AG04450 (cell line): ENCODE measurements at regions of chr1 and their contacts with region 1.

Region 1: DNA sequence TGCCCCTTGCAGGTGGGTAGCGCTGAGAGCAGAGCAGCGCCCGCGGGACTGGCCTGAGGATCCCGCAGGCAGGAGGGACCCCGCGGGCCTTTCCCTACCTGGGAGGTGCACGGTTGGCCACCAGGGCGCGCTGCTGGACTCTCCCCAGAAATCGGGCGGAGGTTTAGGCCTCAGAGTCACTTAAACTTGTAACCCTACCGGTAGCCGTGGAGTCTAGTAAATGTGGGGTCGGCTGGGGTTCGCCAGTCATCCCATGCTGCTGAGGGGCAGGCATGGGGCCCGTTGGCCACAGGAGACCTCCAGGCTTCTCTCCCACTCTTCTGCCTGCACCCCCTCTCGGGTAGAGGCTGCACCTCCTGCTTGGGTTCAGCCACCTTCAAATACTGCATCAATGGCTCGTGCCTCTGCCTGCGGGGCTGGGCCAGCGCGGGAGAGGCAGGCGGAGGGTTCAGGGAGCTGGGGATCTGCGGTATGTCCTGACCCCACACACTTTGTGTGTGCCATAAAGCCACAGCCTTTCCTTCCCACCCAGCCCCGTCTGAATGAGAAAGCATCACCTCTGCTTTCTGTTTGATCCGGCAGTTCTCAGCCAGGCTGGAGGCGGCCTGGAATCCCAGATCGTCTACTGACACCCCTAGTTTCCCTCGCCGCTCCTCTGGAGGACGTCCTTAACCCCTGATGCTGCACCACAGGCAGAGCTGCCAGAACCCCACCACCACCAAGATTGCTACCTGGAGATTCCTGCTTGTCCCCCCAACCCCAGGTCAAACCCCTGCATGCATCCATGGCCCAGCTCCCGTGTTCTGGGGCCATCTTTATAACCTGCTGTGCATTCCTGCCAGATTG is 12.3 kb upstream of the GSTM4 start:
- DNase-seq: no peak
- H3K4me3 ChIP-seq: no peak overlapping the region
- H3K27ac ChIP-seq: no peak overlapping the region
- H3K27me3 ChIP-seq: no peaks in the 10 kb centered on the region
- CTCF ChIP-seq: peak; percentile 87

Region 2: DNA sequence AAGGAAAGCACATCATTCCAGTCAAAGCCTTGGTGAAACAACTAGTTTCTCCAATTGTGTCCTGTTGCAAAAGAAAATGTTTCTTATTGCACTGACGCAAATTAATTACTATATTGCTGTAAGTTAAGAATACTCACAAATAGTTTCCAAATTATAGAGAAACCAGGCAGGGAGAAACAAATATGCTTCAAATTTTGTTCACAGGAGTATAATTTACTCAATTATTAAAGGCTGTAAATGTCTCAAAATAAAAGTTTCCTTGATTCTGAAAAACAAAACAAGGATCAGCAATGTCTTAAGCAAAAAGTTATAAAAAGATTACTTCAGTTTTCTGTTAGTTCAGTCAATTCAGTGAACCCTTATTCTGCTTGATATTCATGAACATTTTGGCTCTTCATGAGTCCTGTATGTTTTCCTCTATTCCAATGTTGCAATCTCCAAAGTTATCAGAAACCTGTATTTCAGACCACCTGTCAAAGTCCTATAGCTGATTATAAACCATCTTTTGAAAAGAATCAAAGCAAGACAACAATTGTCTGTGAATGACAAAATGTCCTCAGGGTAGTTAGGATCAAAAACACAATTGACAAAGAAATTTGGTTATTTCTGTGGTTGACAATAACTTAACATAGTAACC is 189.0 kb before region 1 on chr1:
- CTCF ChIA-PET with region 1: no interaction called
- POLR2A ChIA-PET with region 1: no interaction called
- DNase-seq: no peak
- H3K4me3 ChIP-seq: no peak overlapping the region
- H3K27ac ChIP-seq: no peak overlapping the region
- H3K27me3 ChIP-seq: peaks cover 12% of the 10 kb centered on the region
- CTCF ChIP-seq: no peak

Region 3: DNA sequence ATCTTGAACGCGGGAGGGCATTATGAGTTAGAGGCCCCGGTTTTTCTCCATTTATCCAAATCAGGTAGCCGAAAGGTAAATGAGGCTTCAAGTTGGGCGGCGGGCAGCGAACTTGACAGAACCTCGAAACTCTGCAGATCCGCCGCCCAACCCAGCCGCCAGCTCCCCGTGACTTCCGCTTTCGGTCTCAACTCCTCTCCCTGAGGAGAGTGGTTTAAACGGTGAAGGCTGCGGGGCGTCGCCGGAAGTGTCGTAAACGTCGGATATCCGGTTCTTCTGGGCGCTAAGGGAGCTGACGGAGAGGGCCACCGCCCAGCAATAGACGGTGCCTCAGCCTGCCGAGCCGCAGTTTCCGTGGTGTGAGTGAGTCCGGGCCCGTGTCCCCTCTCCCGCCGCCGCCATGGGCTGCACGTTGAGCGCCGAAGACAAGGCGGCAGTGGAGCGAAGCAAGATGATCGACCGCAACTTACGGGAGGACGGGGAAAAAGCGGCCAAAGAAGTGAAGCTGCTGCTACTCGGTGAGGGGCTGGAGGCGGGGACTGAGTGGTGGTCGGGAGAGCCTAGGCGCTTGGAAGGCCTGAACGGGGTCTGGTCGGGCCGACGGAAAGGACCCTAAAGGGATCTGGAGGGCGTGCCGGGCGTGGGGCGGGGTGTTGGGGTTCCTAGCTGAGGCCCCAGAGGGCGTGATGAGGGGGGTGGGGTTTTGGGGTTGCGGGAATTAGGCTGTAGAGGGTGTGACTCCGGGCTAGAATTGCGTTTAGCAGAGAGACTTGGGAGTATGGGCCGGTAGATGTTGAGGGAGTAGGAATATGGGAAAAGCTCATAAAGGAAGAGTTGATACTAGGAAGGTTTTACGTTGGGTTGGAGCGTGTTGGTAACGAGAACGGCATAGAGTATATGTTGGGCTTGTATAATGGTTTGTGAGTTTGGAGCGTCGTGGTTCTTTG is 95.0 kb before region 1 on chr1 and contains the start of gene GNAI3:
- CTCF ChIA-PET with region 1: interaction called, 106 read pairs
- POLR2A ChIA-PET with region 1: interaction called, 15 read pairs
- DNase-seq: peak; percentile 85
- H3K4me3 ChIP-seq: peak within 1 kb of the TSS; percentile 98
- H3K27ac ChIP-seq: peak within 1 kb of the TSS; percentile 83
- H3K27me3 ChIP-seq: no peaks in the 10 kb centered on the region
- CTCF ChIP-seq: no peak
- polyA plus RNA-seq, gene GNAI3: 10.2 and 14.8 TPM in 2 replicates

Region 4: GRCh38 chr1:109579491-109579890 is 64.1 kb before region 1 on chr1:
- CTCF ChIA-PET with region 1: interaction called, 10 read pairs
- POLR2A ChIA-PET with region 1: no interaction called
- DNase-seq: no peak
- H3K4me3 ChIP-seq: no peak overlapping the region
- H3K27ac ChIP-seq: no peak overlapping the region
- H3K27me3 ChIP-seq: no peaks in the 10 kb centered on the region
- CTCF ChIP-seq: no peak

Region 5: GRCh38 chr1:109620841-109621286 is 22.7 kb before region 1 on chr1:
- CTCF ChIA-PET with region 1: interaction called, 64 read pairs
- POLR2A ChIA-PET with region 1: interaction called, 5 read pairs
- DNase-seq: peak; percentile 78
- H3K4me3 ChIP-seq: peak overlapping the region; percentile 95
- H3K27ac ChIP-seq: peak overlapping the region; percentile 97
- H3K27me3 ChIP-seq: no peaks in the 10 kb centered on the region
- CTCF ChIP-seq: no peak

Region 6: DNA sequence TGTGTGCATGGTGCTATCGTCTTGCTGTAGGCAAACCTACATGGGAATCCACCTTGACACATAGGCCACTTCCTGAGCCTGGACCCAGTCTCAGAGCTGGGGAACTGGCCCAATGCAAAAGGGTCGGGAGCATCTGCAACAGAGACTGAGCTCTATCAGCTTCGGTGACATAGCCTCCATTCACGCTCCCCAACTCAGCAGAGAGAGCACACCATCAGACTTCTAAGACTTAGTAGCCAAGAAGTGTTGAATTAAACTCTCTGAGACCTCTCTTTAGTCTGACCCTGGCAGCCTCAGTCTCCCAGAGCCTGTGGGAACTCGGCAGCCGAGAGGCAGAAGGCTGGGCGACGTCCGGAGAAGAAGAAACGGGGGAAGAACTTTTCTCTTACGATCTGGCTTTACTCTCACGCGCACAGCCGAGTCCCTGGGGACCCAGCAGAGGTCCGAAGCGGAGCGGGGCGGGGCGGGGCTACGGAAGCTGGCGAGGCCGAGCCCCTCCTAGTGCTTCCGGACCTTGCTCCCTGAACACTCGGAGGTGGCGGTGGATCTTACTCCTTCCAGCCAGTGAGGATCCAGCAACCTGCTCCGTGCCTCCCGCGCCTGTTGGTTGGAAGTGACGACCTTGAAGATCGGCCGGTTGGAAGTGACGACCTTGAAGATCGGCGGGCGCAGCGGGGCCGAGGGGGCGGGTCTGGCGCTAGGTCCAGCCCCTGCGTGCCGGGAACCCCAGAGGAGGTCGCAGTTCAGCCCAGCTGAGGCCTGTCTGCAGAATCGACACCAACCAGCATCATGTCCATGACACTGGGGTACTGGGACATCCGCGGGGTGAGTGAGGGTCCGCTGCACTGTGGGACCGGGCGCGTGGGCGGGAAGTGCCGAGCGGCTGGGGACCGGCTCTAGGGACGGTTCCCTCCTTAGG is 12.3 kb after region 1 on chr1 and contains the start of gene GSTM4:
- CTCF ChIA-PET with region 1: interaction called, 102 read pairs
- POLR2A ChIA-PET with region 1: interaction called, 3 read pairs
- DNase-seq: no peak
- H3K4me3 ChIP-seq: peak within 1 kb of the TSS; percentile 84
- H3K27ac ChIP-seq: no peak within 1 kb of the TSS
- H3K27me3 ChIP-seq: no peaks in the 10 kb centered on the region
- CTCF ChIP-seq: no peak
- polyA plus RNA-seq, gene GSTM4: 62.6 and 64.1 TPM in 2 replicates

Region 7: GRCh38 chr1:109697088-109697487 is 53.5 kb after region 1 on chr1:
- CTCF ChIA-PET with region 1: no interaction called
- POLR2A ChIA-PET with region 1: no interaction called
- DNase-seq: no peak
- H3K4me3 ChIP-seq: no peak overlapping the region
- H3K27ac ChIP-seq: no peak overlapping the region
- H3K27me3 ChIP-seq: no peaks in the 10 kb centered on the region
- CTCF ChIP-seq: no peak

Region 8: GRCh38 chr1:109773146-109773899 is 129.7 kb after region 1 on chr1:
- CTCF ChIA-PET with region 1: interaction called, 365 read pairs
- POLR2A ChIA-PET with region 1: interaction called, 3 read pairs
- DNase-seq: peak; percentile 71
- H3K4me3 ChIP-seq: no peak overlapping the region
- H3K27ac ChIP-seq: no peak overlapping the region
- H3K27me3 ChIP-seq: no peaks in the 10 kb centered on the region
- CTCF ChIP-seq: peak; percentile 98

Region 9: DNA sequence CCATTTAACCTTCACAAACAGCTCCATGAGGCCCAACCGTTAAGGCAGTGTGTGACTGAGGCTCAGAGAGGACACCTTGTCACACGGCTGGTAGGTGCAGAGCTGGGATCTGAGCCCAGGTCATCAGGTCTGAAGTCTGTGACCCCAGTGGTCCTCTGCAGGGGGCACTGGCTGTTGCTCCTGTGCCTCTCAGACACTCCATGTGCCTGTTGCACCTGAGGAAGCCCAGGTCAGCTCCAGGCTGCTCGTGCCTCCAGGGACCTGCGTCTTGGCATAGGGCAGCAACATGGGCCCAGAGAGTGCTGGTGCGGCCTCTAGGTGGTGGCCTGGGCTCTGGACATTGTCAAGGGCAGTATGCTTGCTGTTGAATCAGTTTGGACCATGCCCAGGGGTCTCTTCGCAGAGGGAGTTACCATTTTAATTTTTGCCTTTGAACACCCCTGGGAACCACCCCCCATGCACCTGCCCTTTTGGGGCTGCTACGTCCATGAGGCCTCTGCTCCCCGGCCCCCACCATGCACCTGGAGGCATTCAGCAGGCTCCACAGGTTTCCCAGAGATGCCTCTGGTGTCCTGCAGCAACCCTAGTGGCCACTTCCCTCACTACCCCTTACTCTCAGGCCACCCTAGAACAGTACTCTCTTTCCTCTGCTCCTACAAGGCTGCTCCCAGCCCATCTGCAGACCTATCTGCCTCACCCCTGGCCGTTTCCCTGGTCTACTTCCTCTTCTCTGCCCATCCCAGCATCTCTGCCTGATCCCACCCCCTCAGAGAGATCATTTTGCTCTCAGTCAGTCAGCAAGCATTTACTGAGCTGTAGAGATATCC is 145.3 kb after region 1 on chr1:
- CTCF ChIA-PET with region 1: no interaction called
- POLR2A ChIA-PET with region 1: no interaction called
- DNase-seq: no peak
- H3K4me3 ChIP-seq: no peak overlapping the region
- H3K27ac ChIP-seq: no peak overlapping the region
- H3K27me3 ChIP-seq: peaks cover 2% of the 10 kb centered on the region
- CTCF ChIP-seq: peak; percentile 59

Region 10: GRCh38 chr1:110011527-110012041 is 368.0 kb after region 1 on chr1:
- CTCF ChIA-PET with region 1: interaction called, 12 read pairs
- POLR2A ChIA-PET with region 1: no interaction called
- DNase-seq: peak; percentile 34
- H3K4me3 ChIP-seq: no peak overlapping the region
- H3K27ac ChIP-seq: no peak overlapping the region
- H3K27me3 ChIP-seq: no peaks in the 10 kb centered on the region
- CTCF ChIP-seq: peak; percentile 69